ENCODE measurements at regions of chr11 and their contacts with region 1.

Region 1: GRCh38 chr11:44621140-44621681 is 55.7 kb downstream of the CD82 start:
- DNase-seq: peak; percentile 77 to 97 (median 86)

Region 2: GRCh38 chr11:44556735-44557409 is 64.3 kb before region 1 on chr11:
- intact Hi-C with region 1: loop called (anchors 1 kb)
- DNase-seq: peak; percentile 40 to 93 (median 72)

Region 3: DNA sequence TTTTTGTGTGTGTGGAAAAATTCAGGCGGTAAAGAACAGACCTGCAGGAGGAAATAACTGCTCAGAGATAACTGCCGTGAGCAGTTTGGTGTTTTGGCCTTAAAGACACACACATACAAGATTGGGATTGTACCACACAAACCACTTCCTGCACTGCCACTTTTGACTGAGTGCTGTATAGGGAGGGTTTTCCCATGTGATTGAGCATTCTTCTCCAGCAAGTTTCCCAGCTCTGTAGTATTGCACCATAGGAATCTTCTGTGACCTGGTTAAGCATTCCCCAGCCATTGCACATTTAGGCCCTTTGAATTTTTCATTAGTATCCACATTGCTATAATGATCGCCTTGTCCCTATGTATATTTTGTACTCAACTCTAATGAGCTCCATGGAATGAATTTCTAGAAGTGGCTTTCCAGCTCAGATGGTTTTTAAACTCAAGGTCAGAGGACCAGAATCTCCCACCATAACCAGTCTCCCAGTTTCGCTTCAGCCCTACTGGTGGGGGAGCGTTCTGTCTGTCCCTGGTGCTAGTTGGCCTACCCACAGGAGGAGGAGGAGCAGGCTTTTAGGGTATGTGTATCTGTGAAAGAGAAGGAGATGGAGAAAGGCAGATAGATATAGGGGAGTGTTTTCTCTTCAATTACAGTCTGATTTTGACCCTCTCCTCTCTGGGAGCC is 46.5 kb before region 1 on chr11:
- intact Hi-C with region 1: no loop called
- DNase-seq: no peak

Region 4: DNA sequence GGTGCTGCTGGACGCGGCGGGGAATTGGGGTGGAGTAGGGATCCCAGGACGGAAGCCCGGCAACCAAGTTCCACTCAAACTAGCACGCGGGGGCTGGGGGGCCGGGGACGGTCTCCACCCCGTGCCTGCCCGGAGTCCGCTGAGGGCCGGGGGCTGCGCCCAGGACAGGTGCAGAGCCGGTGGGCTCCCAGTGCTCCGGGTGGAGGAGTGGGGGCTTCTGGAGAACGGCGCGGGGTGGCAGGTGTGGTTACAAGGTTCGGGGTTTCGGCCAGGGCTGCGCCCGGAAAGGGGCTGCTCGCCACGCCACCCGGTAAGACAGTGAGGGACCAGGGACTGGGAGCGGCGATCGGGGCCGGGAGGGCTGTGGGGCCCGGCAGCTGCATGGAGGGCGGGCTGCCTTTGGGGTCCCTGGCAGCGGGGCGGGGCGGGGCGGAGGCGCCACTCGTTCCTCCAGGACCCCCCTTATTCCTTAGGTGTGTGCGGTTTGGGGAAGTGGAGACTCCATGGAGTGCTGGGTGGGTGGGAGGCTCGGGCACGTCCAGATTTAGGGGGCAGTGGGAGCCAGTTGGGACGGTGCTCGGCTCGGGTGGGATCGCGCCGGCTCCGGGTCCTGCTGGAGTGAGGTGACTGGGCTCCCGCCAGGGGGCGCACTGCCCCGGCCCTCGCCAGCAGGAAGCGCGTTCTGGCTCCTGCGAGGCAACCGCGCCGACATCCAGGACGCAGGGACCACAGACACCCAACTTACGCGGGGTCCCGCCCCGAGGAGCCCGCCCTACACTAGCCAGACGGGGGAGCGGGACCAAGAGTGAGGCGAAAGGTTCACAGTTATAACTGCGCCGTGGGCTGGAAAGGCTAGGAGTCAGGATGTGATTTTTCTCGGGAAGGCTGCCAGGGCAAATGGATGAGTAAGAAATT is 106.4 kb after region 1 on chr11:
- intact Hi-C with region 1: loop called (anchors 5 kb)
- DNase-seq: peak; percentile 61 to 97 (median 79)

Region 5: DNA sequence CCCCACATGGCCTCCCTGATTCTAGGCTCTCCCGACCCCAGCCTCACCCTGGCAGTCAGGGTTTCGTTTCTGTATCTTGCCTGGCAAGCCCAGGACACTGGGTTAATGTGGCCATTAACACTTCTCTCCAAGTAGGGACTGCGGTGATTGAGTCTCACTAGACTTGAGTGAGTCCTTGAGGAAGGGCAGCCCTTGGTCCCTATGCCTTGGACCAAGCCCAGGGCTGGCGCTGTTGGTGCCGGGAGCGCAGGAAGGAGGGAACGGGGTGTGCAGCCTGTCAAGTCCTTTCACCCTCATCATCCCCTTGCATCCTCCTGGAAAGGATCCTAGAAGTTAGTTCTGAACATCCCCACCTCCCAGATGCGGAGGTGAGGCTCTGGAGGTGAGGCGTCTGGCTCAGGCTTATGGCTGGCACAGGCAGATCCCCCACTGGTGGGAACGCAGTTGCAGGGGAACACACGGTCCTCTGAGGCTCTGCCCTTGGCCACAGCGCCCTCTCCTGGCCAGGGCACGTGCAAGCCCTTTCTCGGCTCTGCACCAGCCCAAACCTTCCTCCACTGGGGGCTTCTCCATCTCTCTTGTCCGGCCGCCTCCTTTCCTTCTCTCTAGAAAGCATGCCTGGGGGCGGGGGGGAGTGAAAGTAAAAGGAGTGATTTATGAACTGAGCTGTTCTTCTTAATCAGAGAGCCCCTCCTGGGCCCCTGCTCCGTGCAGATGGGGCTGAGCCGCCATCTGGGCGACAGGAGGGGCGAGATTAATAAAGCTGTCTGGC is 272.8 kb after region 1 on chr11:
- intact Hi-C with region 1: loop called (anchors 1 kb)
- DNase-seq: peak in 9 of 10 donors; percentile 40 to 96 (median 70)

Region 6: DNA sequence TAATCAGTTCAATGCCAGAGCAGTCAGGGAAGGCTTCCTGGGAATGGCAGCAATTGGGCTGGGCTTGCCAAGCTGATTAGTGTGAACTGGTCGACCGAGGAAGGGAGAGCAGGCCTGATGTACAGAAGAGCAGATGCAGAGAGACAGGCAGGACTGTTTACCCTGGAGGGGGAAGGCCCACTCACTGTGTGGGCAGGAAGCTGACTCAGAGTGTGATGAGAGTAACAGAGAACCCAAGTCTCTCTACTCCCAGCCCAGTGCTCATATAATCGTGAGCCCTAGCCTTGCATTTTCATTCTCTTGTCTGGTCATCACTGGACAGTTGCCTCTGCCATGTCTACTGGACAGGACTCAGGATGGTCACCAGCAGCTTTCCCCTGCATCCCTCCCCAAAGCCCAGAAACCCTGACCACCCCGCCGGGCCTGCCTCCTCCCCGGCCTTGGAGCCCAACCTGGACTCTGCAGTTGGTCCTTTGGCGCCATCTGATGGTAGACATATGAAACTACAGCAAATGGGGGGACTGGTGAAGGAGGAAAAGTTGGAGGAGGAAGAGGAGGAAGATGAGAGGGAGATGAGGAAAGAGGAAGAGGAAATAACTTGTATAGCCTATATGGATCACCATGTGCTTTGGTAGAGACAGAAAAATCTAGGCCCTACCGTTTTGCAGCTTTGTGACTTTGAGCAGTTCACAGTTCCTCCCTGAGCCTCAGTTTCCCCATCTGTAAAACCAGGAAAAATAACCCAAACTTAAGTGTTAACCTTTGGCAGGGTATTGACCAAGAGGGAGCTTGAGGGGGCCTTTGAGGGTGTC is 481.8 kb after region 1 on chr11:
- intact Hi-C with region 1: loop called (anchors 10 kb)
- DNase-seq: peak in 5 of 10 donors; percentile 59 to 92 (median 65)

Measured in posterior cingulate gyrus (tissue), 11 donors.